ENCODE measurements at regions of chr19 and their contacts with region 1.

Region 1: GRCh38 chr19:17859533-17860330 is at the start of gene RPL18A:
- DNase-seq: peak; percentile 98 to 100 (median 99)
- H3K4me3 ChIP-seq: peak within 1 kb of the TSS; percentile 38 to 95 (median 78)
- H3K27ac ChIP-seq: peak within 1 kb of the TSS; percentile 52 to 91 (median 77)
- H3K4me1 ChIP-seq: peaks cover 8 to 23% of the 10 kb centered on the region in 2 donors
- H3K27me3 ChIP-seq: no peaks in the 10 kb centered on the region
- CTCF ChIP-seq: peak; percentile 68 to 91 (median 86)
- POLR2A ChIP-seq: peak; percentile 90 to 92
- total RNA-seq, gene RPL18A: 952 to 2,121 (median 1,385) TPM

Region 2: GRCh38 chr19:17784201-17785008 is 75.3 kb before region 1 on chr19:
- intact Hi-C with region 1: loop called in 1 of 2 experiments (anchors 10 kb)
- DNase-seq: peak; percentile 47 to 83 (median 64)
- H3K4me3 ChIP-seq: no peak overlapping the region
- H3K27ac ChIP-seq: no peak overlapping the region
- H3K4me1 ChIP-seq: no peaks in the 10 kb centered on the region
- H3K27me3 ChIP-seq: peaks cover 5% of the 10 kb centered on the region
- CTCF ChIP-seq: peak; percentile 63 to 81 (median 68)
- POLR2A ChIP-seq: no peak

Region 3: DNA sequence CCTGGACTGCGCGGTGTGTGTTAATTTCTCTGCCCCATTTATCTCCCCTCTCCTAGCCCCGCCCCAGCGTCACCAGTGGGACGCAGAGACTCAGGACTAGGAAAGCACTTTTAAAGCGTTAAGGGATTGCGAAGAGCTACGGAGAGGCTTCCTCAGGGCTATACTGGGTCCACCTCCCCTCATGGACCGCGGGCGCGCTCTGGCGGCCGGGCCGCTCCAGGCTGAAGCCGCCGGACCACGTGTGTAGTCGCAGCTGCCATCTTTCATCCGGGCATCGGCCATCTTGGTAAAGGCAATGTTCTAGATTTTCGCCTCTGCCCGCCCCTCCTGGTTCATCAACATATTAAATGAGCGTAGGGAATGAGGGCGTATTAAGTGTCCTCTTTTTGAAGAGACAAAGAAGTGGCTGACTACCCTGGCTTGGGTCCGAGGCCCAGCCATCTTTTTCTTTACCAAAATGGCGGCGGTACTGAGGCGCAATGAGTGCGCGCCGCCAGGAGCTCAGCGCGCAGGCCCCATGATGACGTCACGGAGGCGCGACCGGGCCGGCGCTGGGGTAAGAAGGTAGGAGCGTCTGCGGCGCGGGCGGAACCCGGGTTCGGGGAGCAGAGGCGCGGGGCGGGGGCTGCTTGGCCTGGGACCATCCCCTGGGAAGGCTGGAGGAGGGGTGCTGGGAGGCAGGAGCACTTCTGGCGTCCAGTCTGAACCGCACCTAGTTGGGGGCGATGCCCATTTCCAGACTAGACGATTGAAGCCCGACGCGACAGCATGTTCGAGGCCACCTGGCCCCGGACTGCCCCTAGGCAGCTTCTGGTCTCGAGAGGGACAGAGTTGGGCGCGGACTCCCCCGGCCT is 73.0 kb after region 1 on chr19 and contains the start of gene CCDC124:
- intact Hi-C with region 1: loop called (anchors 2 to 5 kb)
- DNase-seq: peak; percentile 91 to 95 (median 91)
- H3K4me3 ChIP-seq: peak within 1 kb of the TSS; percentile 62 to 84 (median 81)
- H3K27ac ChIP-seq: peak within 1 kb of the TSS; percentile 27 to 95 (median 87)
- H3K4me1 ChIP-seq: peaks cover 7 to 17% of the 10 kb centered on the region in 2 donors
- H3K27me3 ChIP-seq: no peaks in the 10 kb centered on the region
- CTCF ChIP-seq: peak; percentile 67 to 97 (median 93)
- POLR2A ChIP-seq: peak; percentile 45 to 57
- total RNA-seq, gene CCDC124: 25.8 to 70.0 (median 64.0) TPM

Region 4: GRCh38 chr19:17985037-17985818 is 125.5 kb after region 1 on chr19:
- intact Hi-C with region 1: no loop called
- DNase-seq: no peak
- H3K4me3 ChIP-seq: no peak overlapping the region
- H3K27ac ChIP-seq: no peak overlapping the region
- H3K4me1 ChIP-seq: no peaks in the 10 kb centered on the region
- H3K27me3 ChIP-seq: no peaks in the 10 kb centered on the region
- CTCF ChIP-seq: no peak
- POLR2A ChIP-seq: no peak

Measured in adrenal gland (tissue), 19 donors.